GM23248 (cell line): ENCODE measurements at regions of chr1 and their contacts with region 1.

Region 1: DNA sequence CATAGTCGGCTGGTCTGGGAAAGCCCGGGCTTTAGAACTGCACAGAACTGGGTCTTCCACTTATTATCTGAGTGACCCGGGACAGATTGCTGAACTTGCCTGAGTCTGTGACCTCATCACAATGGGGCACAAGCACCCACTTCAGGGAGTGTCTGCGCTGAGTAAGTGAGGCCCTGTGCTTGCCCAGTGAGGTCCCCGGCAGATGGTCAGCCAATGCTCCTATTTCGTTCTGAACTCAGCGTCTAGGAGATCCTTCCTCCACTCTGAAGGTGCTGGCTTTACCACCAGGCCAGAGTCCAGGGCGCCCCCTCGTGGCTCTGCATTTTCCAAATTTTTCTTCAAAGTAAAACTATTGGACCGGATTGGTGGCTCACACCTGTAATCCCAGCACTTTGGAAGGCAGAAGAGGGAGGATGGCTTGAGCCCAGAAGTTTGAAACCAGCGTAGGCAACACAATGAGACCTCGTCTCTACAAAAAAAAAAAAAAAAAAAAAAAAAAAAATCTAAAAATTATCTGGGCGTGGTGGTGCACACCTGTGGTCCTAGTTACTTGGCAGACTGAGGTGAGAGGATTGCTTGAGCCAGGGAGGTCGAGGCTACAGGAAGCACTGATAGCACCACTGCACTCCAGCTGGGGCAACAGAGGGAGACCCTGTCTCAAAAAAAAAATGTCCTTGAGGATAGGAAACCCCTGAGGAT is 61.7 kb downstream of the FCRL5 start:
- DNase-seq: peak; percentile 70
- H3K4me3 ChIP-seq: no peak overlapping the region
- H3K27ac ChIP-seq: no peak overlapping the region
- H3K4me1 ChIP-seq: no peaks in the 10 kb centered on the region
- H3K27me3 ChIP-seq: peaks cover 7% of the 10 kb centered on the region; the same call in 1 of the 2 replicates

Region 2: DNA sequence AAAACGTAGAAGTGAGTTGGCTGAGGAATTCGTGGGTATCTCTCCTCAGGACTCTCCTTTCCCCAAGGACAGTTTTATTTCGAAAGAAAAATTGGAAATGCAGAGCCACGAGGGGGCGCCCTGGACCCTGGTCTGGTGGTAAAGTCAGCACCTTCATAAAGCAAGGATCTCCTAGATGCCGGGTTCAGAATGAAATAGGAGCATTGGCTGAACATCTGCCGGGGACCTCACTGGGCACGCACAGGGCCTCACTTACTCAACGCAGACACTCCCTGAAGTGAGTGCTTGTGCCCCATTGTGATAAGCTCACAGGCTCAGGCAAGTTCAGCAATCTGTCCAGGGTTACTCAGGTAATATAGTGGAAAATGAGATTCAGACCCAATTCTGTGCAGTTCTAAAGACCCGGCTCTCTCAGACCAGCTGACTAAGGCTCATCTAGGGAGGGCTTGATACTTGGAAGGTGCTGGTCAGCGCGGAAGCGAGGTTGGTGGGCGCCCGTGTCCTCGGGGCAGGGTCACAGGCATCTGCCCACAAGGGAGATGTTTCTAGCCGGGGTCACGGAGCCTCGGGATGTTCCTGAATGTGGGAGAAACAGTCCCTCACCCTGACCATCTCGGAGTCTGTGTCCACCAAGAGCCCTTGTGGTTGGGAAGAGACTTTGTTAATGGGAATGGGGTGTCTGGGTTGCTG is 296.8 kb before region 1 on chr1:
- in situ Hi-C with region 1: loop called (anchors 10 kb)
- DNase-seq: peak; percentile 70
- H3K4me3 ChIP-seq: no peak overlapping the region
- H3K27ac ChIP-seq: no peak overlapping the region
- H3K4me1 ChIP-seq: no peaks in the 10 kb centered on the region
- H3K27me3 ChIP-seq: peaks cover 45% of the 10 kb centered on the region

Region 3: DNA sequence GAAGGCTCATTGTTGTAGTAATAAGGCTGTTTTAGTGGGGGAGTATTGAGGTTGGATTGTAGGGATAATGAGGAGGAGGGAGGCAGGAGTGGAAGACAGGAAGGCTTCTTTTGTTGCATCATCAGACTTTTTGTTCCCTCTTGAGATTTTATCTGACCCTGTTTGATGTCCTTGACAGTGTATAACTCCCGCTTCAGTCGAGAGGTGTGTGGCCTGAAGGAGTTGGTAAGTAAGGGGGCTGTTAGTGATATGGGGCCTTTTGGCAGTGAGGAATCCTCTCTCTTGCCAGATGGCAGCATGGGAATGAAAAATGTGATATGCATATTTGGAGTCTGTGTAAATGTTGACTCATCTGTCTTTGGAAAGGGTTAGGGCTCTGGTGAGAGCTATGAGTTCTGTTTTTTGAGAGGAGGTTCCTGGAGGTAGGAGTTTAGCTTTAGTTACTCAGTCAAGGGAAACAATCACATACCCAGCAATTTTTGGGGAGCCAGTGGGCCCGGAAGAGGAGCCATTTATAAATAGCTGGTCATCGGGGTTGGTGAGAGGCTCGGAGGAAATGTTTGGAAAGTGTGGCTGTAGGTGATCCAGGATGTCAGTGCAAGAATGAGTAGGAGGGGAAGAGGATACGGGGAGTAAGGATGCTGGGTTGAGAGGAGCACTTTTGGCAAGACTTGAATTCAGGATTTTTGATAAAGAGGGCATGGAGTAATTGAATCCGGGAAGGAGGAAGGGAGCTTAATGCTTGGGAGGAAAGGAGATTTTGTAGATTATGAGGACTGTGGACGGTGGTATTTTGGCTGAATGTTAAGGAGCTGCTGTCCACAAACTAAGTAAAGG is 215.7 kb before region 1 on chr1:
- in situ Hi-C with region 1: no loop called
- DNase-seq: peak; percentile 61
- H3K4me3 ChIP-seq: no peak overlapping the region
- H3K27ac ChIP-seq: no peak overlapping the region
- H3K4me1 ChIP-seq: no peaks in the 10 kb centered on the region
- H3K27me3 ChIP-seq: peaks cover 22% of the 10 kb centered on the region

Region 4: GRCh38 chr1:157369808-157370521 is 120.7 kb before region 1 on chr1:
- in situ Hi-C with region 1: loop called (anchors 5 kb)
- DNase-seq: peak; percentile 56
- H3K4me3 ChIP-seq: no peak overlapping the region
- H3K27ac ChIP-seq: no peak overlapping the region
- H3K4me1 ChIP-seq: peaks cover 5% of the 10 kb centered on the region; the same call in 1 of the 2 replicates
- H3K27me3 ChIP-seq: no peaks in the 10 kb centered on the region